Sigmoid colon (tissue), 7 donors: ENCODE measurements at regions of chr12 and their contacts with region 1.

Region 1: GRCh38 chr12:3872800-3873636 is at the start of gene PARP11:
- DNase-seq: peak; percentile 99
- H3K4me3 ChIP-seq: peak within 1 kb of the TSS; percentile 58 to 71 (median 68)
- H3K27ac ChIP-seq: peak within 1 kb of the TSS; percentile 87 to 92 (median 91)
- H3K4me1 ChIP-seq: peaks cover 0 to 29% (median 19%) of the 10 kb centered on the region in 4 donors
- H3K27me3 ChIP-seq: no peaks in the 10 kb centered on the region
- CTCF ChIP-seq: no peak
- EP300 ChIP-seq: no peak
- POLR2A ChIP-seq: peak; percentile 21 to 37
- total RNA-seq, gene PARP11: 5.8 to 12.1 (median 8.8) TPM

Region 2: GRCh38 chr12:4030929-4031702 is 158.1 kb after region 1 on chr12:
- intact Hi-C with region 1: loop called (anchors 5 kb)
- DNase-seq: peak; percentile 95
- H3K4me3 ChIP-seq: peak overlapping the region; percentile 36 to 62 (median 52)
- H3K27ac ChIP-seq: peak overlapping the region; percentile 71 to 93 (median 88)
- H3K4me1 ChIP-seq: peaks cover 0 to 14% (median 12%) of the 10 kb centered on the region in 4 donors
- H3K27me3 ChIP-seq: no peaks in the 10 kb centered on the region
- CTCF ChIP-seq: peak in 1 of 4 experiments; percentile 17
- EP300 ChIP-seq: peak in 1 of 4 donors; percentile 31
- POLR2A ChIP-seq: peak in 1 of 2 donors; percentile 59

Region 3: GRCh38 chr12:4064008-4064407 is 191.0 kb after region 1 on chr12:
- intact Hi-C with region 1: no loop called
- DNase-seq: no peak
- H3K4me3 ChIP-seq: no peak overlapping the region
- H3K27ac ChIP-seq: no peak overlapping the region
- H3K4me1 ChIP-seq: no peaks in the 10 kb centered on the region
- H3K27me3 ChIP-seq: no peaks in the 10 kb centered on the region
- CTCF ChIP-seq: no peak
- EP300 ChIP-seq: no peak
- POLR2A ChIP-seq: no peak